Activated T-helper 1 cell treated with anti-CD3 and anti-CD28 coated beads, Interleukin-12 subunit alpha, Interleukin-12 subunit beta, Interleukin-2, Interleukin-4 antibody, amounts not matched to agents 30 ng/mL and 10 ng/mL and 1 ng/mL, durations not matched to agents 14 hours and 24 hours and 36 hours (primary cell): ENCODE measurements at regions of chr18 and their contacts with region 1.

Region 1: GRCh38 chr18:12934454-12935071 is 13.2 kb upstream of the SEH1L start:
- DNase-seq: peak; percentile 53
- H3K4me3 Mint-ChIP-seq: no peak overlapping the region
- H3K27ac Mint-ChIP-seq: no peak overlapping the region
- H3K4me1 Mint-ChIP-seq: peaks cover 5% of the 10 kb centered on the region
- H3K27me3 Mint-ChIP-seq: peaks cover 19% of the 10 kb centered on the region

Region 2: DNA sequence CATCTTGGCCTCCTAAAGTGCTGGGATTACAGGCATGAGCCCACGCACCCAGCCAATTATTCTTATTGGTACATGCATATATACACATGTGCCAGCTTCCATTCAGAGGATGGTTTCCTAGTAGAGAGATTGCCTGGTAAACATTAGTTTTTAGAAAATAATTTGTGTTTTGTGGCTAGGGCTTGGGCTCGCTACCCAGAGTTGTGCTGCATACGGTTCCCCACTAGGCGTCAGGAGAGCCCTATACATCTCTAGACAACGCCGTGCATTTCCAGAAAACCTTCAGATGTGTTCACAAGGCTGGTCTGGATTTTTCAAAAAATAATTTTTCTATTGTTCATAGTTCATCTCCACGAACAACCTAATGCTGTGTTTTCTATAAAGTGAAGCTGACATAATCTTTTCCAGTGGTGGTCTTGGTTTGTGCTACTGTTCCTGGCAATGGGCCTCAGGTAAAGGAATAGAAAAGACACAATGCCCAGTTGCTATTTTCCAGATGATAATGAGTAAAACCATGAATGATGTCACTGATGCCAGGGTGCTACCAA is 542.9 kb before region 1 on chr18:
- intact Hi-C with region 1: loop called (anchors 2 kb)
- DNase-seq: peak; percentile 26
- H3K4me3 Mint-ChIP-seq: no peak overlapping the region
- H3K27ac Mint-ChIP-seq: no peak overlapping the region
- H3K4me1 Mint-ChIP-seq: peaks cover 5% of the 10 kb centered on the region
- H3K27me3 Mint-ChIP-seq: peaks cover 4% of the 10 kb centered on the region

Region 3: GRCh38 chr18:12726774-12727550 is 207.6 kb before region 1 on chr18:
- intact Hi-C with region 1: loop called (anchors 1 kb)
- DNase-seq: peak; percentile 37
- H3K4me3 Mint-ChIP-seq: no peak overlapping the region
- H3K27ac Mint-ChIP-seq: peak overlapping the region; percentile 71
- H3K4me1 Mint-ChIP-seq: peaks cover 11% of the 10 kb centered on the region
- H3K27me3 Mint-ChIP-seq: no peaks in the 10 kb centered on the region

Region 4: DNA sequence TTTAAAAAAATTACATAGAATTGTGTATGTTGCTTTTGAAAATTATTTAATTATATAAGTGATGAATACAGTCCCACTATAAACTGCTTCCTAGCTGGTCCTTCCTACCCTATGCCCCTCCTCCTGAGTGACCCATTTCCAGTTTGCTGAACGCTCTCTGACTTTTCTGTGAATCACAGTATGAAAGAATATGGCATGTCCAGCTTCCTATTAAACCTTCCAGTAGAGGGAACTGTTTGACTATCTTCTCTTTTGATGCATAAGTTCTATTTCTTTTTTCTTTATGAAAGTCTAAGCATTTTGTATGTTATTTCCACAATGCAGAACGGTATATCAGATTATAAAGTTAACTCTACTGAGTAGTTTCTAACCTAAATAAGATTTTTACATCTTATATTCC is 190.5 kb before region 1 on chr18:
- intact Hi-C with region 1: loop called (anchors 1 kb)
- DNase-seq: no peak
- H3K4me3 Mint-ChIP-seq: no peak overlapping the region
- H3K27ac Mint-ChIP-seq: no peak overlapping the region
- H3K4me1 Mint-ChIP-seq: peaks cover 2% of the 10 kb centered on the region
- H3K27me3 Mint-ChIP-seq: no peaks in the 10 kb centered on the region

Region 5: GRCh38 chr18:12890506-12890905 is 44.1 kb before region 1 on chr18:
- intact Hi-C with region 1: loop called (anchors 1 kb)
- DNase-seq: no peak
- H3K4me3 Mint-ChIP-seq: no peak overlapping the region
- H3K27ac Mint-ChIP-seq: no peak overlapping the region
- H3K4me1 Mint-ChIP-seq: peaks cover 33% of the 10 kb centered on the region
- H3K27me3 Mint-ChIP-seq: peaks cover 7% of the 10 kb centered on the region

Region 6: GRCh38 chr18:12911025-12911928 is 23.3 kb before region 1 on chr18:
- intact Hi-C with region 1: loop called (anchors 2 kb)
- DNase-seq: peak; percentile 40
- H3K4me3 Mint-ChIP-seq: peak overlapping the region; percentile 39
- H3K27ac Mint-ChIP-seq: no peak overlapping the region
- H3K4me1 Mint-ChIP-seq: no peaks in the 10 kb centered on the region
- H3K27me3 Mint-ChIP-seq: peaks cover 31% of the 10 kb centered on the region